ENCODE measurements at regions of chr4 and their contacts with region 1.

Region 1: DNA sequence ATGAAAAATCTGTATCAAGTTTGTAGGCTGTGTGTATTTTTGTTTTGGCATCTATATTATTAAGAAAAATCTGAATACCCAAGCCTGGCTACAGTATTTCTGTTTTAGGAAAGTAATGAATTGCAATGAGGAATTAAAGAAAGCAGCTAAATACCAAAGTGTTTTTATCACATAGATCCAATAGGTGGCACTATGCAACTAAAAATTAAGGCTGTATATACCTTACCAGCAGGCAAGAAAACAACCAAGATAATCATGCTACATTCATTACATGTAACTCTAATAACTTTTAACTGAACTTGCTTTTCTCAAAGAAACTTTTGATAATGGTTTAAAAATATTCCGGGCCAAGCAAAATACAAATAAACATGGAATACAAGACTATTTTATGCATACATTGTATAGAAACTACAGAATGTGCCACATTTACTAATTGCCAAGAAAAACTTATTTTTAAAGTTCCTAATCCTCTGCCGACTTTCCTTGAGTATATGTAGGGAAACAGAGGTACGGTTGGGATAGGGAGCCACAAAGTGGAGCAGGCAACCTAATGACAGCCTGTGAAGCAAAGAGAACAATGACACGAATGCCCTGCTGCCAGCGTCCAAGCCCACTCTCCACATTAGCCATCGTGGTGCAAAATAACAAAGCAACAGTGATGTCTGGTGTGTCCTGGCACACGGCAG is 63.7 kb downstream of the SEC24D start:
- DNase-seq: no peak
- H3K4me3 Mint-ChIP-seq: no peak overlapping the region
- H3K27ac Mint-ChIP-seq: no peak overlapping the region
- H3K4me1 Mint-ChIP-seq: no peaks in the 10 kb centered on the region
- H3K27me3 Mint-ChIP-seq: no peaks in the 10 kb centered on the region

Region 2: GRCh38 chr4:118865091-118865708 is 93.0 kb after region 1 on chr4:
- CTCF ChIA-PET with region 1: interaction called, 15 read pairs
- DNase-seq: peak; percentile 34
- H3K4me3 Mint-ChIP-seq: no peak overlapping the region
- H3K27ac Mint-ChIP-seq: no peak overlapping the region
- H3K4me1 Mint-ChIP-seq: peaks cover 4% of the 10 kb centered on the region
- H3K27me3 Mint-ChIP-seq: peaks cover 4% of the 10 kb centered on the region

Region 3: GRCh38 chr4:118888666-118889311 is 116.6 kb after region 1 on chr4 and contains the start of gene SYNPO2:
- CTCF ChIA-PET with region 1: interaction called, 36 read pairs
- DNase-seq: peak; percentile 53
- H3K4me3 Mint-ChIP-seq: peak within 1 kb of the TSS; percentile 61
- H3K27ac Mint-ChIP-seq: no peak within 1 kb of the TSS
- H3K4me1 Mint-ChIP-seq: peaks cover 21% of the 10 kb centered on the region
- H3K27me3 Mint-ChIP-seq: peaks cover 49% of the 10 kb centered on the region

Measured in activated naive CD4-positive, alpha-beta T cell treated with anti-CD3 and anti-CD28 coated beads, Interleukin-2, amount 10 ng/mL, durations not matched to agents 7 days and 5 days (primary cell).